T-cell (primary cell): ENCODE measurements at regions of chr3 and their contacts with region 1.

Region 1: DNA sequence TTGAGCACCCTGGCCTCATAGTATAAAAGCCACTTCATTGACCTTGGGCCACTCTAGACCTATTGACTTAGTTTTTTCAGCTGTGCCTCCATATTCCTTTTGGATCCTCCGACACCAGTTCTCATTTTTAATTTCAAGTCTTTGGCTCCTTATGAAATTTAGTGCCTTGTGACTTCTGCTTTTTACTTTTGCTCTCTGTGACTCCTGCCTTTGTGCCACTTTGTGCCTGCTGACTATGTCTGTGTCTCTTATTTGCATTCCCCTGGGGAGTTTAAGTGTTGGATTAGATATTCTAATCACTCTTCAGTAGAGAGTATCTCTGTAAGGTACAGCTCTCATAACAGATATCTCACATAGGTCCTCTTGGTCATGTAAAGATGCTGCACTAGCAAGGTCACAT is 39.6 kb upstream of the GPR149 start:
- DNase-seq: no peak
- ATAC-seq: no peak
- H3K4me3 ChIP-seq: no peak overlapping the region
- H3K4me3 Mint-ChIP-seq: no peak overlapping the region
- H3K27ac ChIP-seq: no peak overlapping the region
- H3K27ac Mint-ChIP-seq: no peak overlapping the region
- H3K4me1 ChIP-seq: no peaks in the 10 kb centered on the region
- H3K4me1 Mint-ChIP-seq: no peaks in the 10 kb centered on the region
- H3K27me3 ChIP-seq: no peaks in the 10 kb centered on the region
- H3K27me3 Mint-ChIP-seq: peaks cover 0 to 7% of the 10 kb centered on the region in 2 donors

Region 2: DNA sequence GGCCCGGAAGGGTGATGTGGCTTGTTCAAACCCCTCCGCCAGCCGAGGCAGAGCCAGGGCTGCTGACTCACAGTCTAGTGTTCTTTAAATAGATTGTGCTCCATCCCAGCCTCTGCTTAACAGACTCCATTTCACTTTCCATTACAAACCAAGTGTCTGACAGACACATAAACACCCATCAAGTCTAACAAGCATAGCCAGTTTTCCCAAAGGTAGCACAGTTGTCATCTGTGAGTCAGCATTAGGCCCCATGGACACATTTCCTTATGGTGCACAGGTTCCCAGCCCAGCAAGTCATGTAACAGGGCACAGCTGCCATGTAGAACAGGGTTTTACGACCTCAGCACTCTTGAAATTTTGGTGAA is 1417.5 kb before region 1 on chr3:
- CTCF ChIA-PET with region 1: interaction called in 1 of 2 experiments, 10 read pairs
- POLR2A ChIA-PET with region 1: no interaction called
- DNase-seq: no peak
- ATAC-seq: no peak
- H3K4me3 ChIP-seq: no peak overlapping the region
- H3K4me3 Mint-ChIP-seq: no peak overlapping the region
- H3K27ac ChIP-seq: no peak overlapping the region
- H3K27ac Mint-ChIP-seq: no peak overlapping the region
- H3K4me1 ChIP-seq: no peaks in the 10 kb centered on the region
- H3K4me1 Mint-ChIP-seq: peaks cover 0 to 4% (median 0%) of the 10 kb centered on the region in 3 donors
- H3K27me3 ChIP-seq: no peaks in the 10 kb centered on the region
- H3K27me3 Mint-ChIP-seq: no peaks in the 10 kb centered on the region